PC-9 (cell line): ENCODE measurements at regions of chr16 and their contacts with region 1.

Region 1: DNA sequence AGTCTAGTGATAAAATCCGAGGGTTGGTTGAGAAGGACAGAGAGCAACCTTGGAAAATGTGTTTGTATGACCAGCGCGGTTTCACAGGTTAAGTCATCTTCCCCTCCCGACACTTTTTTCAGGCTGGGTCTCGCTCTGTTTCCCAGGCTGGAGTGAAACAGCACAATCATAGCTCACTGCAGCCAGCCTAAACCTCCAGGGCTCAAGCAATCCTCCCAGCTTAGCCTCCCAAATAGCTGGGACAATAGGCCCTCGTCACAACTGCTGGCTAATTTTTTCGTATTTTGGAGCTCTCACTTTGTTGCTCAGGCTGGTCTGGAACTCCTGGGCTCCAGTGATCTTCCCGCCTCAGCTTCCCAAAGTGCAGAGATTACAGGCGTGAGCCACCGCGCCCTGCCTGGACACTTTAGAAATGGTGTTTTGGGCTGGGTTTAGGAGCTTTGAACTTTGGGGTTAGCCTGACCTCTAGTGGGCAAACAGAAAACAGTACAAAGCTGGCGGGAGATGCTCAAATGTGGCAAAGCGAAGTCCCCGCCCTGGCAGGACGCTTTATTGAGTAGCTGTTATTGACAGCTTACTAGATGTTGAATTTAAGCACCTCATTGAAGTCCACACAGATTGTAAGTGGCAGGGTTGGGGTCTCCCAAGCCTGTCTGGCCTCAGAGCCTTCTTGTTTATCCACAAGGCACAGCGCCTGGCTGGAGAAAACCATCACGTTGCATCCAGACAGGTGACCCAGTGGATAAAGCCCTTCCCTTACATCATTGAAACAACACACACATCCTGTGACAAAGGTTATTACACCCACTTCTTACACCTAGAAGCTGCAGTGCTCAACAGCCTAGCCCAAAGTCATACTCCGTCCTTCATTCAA is 34.7 kb upstream of the RBBP6 start:
- DNase-seq: peak; percentile 50 to 57
- H3K4me3 ChIP-seq: no peak overlapping the region
- H3K27ac ChIP-seq: no peak overlapping the region
- H3K4me1 ChIP-seq: no peaks in the 10 kb centered on the region
- H3K27me3 ChIP-seq: peaks cover 35% of the 10 kb centered on the region
- CTCF ChIP-seq: peak; percentile 81

Region 2: DNA sequence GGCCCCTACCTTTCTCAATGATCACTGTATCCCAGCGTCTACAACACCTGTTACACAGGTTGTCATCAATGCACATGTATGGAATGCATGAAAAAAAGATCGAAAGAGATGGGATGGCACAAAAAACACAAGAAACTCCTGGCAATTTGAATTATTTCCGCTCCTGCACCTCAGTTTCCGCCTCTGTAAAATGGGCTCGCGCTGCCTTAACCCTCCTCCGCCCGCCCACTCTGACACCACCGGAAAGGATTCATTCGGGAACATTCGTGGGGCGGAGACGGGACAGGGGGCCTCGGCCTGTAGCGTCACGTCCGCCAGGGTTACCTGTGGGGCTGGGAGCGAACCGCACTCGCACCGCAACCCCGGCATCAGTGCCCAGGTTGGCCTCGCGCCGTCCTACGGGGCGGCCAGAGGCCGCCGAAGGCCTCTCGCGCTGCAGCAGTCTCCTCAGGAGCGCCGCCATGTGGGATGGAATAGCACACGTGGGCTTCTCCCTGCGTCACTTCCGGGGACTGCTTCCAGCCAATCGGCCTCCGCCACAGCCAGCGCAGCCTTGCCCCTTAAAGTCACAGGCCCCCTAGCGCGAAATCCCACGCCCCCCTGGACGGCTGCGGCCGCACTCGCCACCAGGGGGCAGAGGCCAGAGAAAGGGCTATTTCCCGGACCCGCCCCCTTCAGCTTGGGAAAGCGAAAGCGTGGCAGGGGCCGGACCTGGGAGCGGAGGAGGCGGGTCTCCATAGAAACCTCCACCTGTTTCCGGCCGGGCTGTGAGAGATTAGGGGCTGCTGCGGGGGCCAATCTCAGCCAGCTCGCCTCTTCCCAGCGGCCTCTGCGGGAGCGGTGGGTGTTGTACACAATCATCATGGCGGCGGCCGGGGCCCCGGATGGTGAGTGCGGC is 947.6 kb before region 1 on chr16 and contains the starts of genes EARS2 and UBFD1:
- CTCF ChIA-PET with region 1: no interaction called
- POLR2A ChIA-PET with region 1: no interaction called
- intact Hi-C with region 1: loop called (anchors 5 kb)
- DNase-seq: peak; percentile 94 to 100
- H3K4me3 ChIP-seq: peak within 1 kb of the TSS; percentile 98
- H3K27ac ChIP-seq: peak within 1 kb of the TSS; percentile 79
- H3K4me1 ChIP-seq: peaks cover 26% of the 10 kb centered on the region
- H3K27me3 ChIP-seq: no peaks in the 10 kb centered on the region
- CTCF ChIP-seq: peak; percentile 89
- total RNA-seq, gene EARS2: 34.9 and 43.3 TPM in 2 replicates
- total RNA-seq, gene UBFD1: 95.8 and 98.2 TPM in 2 replicates

Region 3: GRCh38 chr16:23739516-23739915 is 765.2 kb before region 1 on chr16:
- CTCF ChIA-PET with region 1: no interaction called
- POLR2A ChIA-PET with region 1: no interaction called
- intact Hi-C with region 1: loop called (anchors 5 kb)
- DNase-seq: no peak
- H3K4me3 ChIP-seq: no peak overlapping the region
- H3K27ac ChIP-seq: no peak overlapping the region
- H3K4me1 ChIP-seq: no peaks in the 10 kb centered on the region
- H3K27me3 ChIP-seq: peaks cover 70% of the 10 kb centered on the region
- CTCF ChIP-seq: no peak

Region 4: DNA sequence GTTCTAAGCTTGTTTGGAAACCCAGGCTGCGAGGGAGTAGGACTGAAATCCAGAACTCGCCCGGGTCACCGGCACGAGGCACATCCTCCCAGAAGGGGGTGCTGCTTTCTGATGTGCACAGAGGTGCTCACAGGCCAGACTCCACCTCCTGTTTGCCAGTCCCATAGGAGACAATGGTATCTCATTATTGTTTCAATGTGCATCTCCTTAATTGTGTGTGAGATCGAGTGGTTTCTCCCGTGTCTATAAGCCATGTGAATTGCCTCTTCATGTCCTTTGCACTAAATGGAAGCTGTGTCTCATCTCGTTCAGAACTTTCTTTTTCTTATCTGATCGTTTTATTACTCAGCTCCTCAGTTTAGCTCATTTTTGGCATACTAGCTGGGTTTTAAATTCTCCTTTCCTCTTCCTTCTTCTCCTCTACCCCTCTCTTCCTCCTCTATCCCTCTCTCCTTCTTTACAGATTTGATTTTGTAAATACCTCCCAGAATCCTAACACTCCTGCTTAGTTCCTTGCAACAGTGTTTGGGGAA is 701.1 kb before region 1 on chr16:
- CTCF ChIA-PET with region 1: interaction called, 3 read pairs
- POLR2A ChIA-PET with region 1: no interaction called
- intact Hi-C with region 1: loop called (anchors 1 kb)
- DNase-seq: peak in 1 of 2 experiments; percentile 30
- H3K4me3 ChIP-seq: no peak overlapping the region
- H3K27ac ChIP-seq: no peak overlapping the region
- H3K4me1 ChIP-seq: 0 out of 2 replicates have a peak, but pooled peaks cover 4% of the 10 kb centered on the region
- H3K27me3 ChIP-seq: peaks cover 56% of the 10 kb centered on the region
- CTCF ChIP-seq: peak; percentile 41; the same call in 1 of the 2 replicates

Region 5: GRCh38 chr16:24041826-24042631 is 462.7 kb before region 1 on chr16:
- CTCF ChIA-PET with region 1: interaction called, 15 read pairs
- POLR2A ChIA-PET with region 1: no interaction called
- intact Hi-C with region 1: loop called (anchors 1 kb)
- DNase-seq: peak in 1 of 2 experiments; percentile 68
- H3K4me3 ChIP-seq: no peak overlapping the region
- H3K27ac ChIP-seq: no peak overlapping the region
- H3K4me1 ChIP-seq: no peaks in the 10 kb centered on the region
- H3K27me3 ChIP-seq: peaks cover 65% of the 10 kb centered on the region
- CTCF ChIP-seq: peak; percentile 90

Region 6: GRCh38 chr16:24308181-24308580 is 196.5 kb before region 1 on chr16:
- CTCF ChIA-PET with region 1: no interaction called
- POLR2A ChIA-PET with region 1: interaction called, 25 read pairs
- intact Hi-C with region 1: no loop called
- DNase-seq: no peak
- H3K4me3 ChIP-seq: no peak overlapping the region
- H3K27ac ChIP-seq: no peak overlapping the region
- H3K4me1 ChIP-seq: no peaks in the 10 kb centered on the region
- H3K27me3 ChIP-seq: peaks cover 44% of the 10 kb centered on the region
- CTCF ChIP-seq: no peak

Region 7: GRCh38 chr16:24409049-24409448 is 95.7 kb before region 1 on chr16:
- CTCF ChIA-PET with region 1: no interaction called
- POLR2A ChIA-PET with region 1: no interaction called
- intact Hi-C with region 1: loop called (anchors 1 kb)
- DNase-seq: no peak
- H3K4me3 ChIP-seq: no peak overlapping the region
- H3K27ac ChIP-seq: no peak overlapping the region
- H3K4me1 ChIP-seq: no peaks in the 10 kb centered on the region
- H3K27me3 ChIP-seq: peaks cover 67% of the 10 kb centered on the region
- CTCF ChIP-seq: peak; percentile 47

Region 8: GRCh38 chr16:24626256-24626655 is 121.5 kb after region 1 on chr16:
- CTCF ChIA-PET with region 1: no interaction called
- POLR2A ChIA-PET with region 1: no interaction called
- intact Hi-C with region 1: no loop called
- DNase-seq: peak in 1 of 2 experiments; percentile 71
- H3K4me3 ChIP-seq: no peak overlapping the region
- H3K27ac ChIP-seq: peak overlapping the region; percentile 52
- H3K4me1 ChIP-seq: peaks cover 12% of the 10 kb centered on the region
- H3K27me3 ChIP-seq: no peaks in the 10 kb centered on the region
- CTCF ChIP-seq: no peak